ENCODE measurements at regions of chr20 and their contacts with region 1.

Region 1: DNA sequence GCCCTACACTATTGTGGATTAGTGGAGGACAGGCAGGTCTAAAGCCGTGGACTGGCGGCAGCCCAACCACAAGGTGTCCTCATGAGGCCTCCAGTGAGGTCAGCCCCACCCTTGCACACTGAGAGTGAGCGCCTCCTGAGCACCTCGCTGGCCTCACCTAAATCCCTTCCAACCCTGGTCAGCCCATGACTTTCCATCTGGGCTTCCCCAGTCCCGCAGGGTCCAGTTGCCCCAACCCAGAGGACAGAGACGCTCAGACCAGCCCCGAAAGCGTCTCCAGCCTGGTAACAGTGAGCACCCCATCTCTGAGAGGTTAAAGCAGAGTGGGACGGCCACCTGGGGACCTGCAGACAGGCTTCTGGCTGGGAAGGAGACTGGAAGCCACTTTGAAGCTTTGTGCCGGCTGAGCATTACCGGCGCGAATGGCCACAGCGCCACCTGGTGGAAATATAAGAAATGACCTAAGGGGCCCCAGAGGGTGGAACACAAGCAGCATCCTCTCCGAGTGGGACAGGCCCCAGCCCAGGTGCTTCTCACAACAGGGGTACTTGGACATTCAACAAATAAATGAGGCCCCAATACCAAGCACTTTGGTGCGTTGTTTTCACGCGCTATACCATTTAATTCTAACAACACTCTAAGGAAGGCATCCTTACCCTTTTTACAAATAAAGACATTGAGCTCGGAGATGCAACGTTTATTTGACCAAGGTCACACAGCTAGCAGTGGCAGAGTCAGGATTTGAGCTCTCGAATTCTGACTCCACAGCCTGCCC is 65.7 kb upstream of the TOP1 start:
- DNase-seq: peak; percentile 64 to 68 (median 65)
- H3K4me3 ChIP-seq: no peak overlapping the region
- H3K4me3 Mint-ChIP-seq: peak overlapping the region in 1 of 8 donors; percentile 4
- H3K27ac ChIP-seq: no peak overlapping the region
- H3K27ac Mint-ChIP-seq: no peak overlapping the region
- H3K4me1 ChIP-seq: peaks cover 16% of the 10 kb centered on the region
- H3K4me1 Mint-ChIP-seq: peaks cover 7 to 13% (median 8%) of the 10 kb centered on the region in 4 donors
- H3K27me3 ChIP-seq: no peaks in the 10 kb centered on the region
- H3K27me3 Mint-ChIP-seq: peaks cover 0 to 3% of the 10 kb centered on the region in 2 donors

Region 2: GRCh38 chr20:39264506-39265172 is 1698.3 kb before region 1 on chr20:
- CTCF ChIA-PET with region 1: interaction called, 13 read pairs
- POLR2A ChIA-PET with region 1: no interaction called
- intact Hi-C with region 1: no loop called
- DNase-seq: peak in 3 of 5 donors; percentile 2 to 11 (median 4)
- H3K4me3 ChIP-seq: no peak overlapping the region
- H3K4me3 Mint-ChIP-seq: no peak overlapping the region
- H3K27ac ChIP-seq: no peak overlapping the region
- H3K27ac Mint-ChIP-seq: no peak overlapping the region
- H3K4me1 ChIP-seq: no peaks in the 10 kb centered on the region
- H3K4me1 Mint-ChIP-seq: no peaks in the 10 kb centered on the region
- H3K27me3 ChIP-seq: no peaks in the 10 kb centered on the region
- H3K27me3 Mint-ChIP-seq: peaks cover 2 to 6% of the 10 kb centered on the region in 2 donors

Region 3: GRCh38 chr20:40741507-40742106 is 221.3 kb before region 1 on chr20:
- CTCF ChIA-PET with region 1: interaction called, 35 read pairs
- POLR2A ChIA-PET with region 1: no interaction called
- intact Hi-C with region 1: no loop called
- DNase-seq: peak in 4 of 5 donors; percentile 9 to 28 (median 22)
- H3K4me3 ChIP-seq: no peak overlapping the region
- H3K4me3 Mint-ChIP-seq: no peak overlapping the region
- H3K27ac ChIP-seq: no peak overlapping the region
- H3K27ac Mint-ChIP-seq: no peak overlapping the region
- H3K4me1 ChIP-seq: no peaks in the 10 kb centered on the region
- H3K4me1 Mint-ChIP-seq: peaks cover 3 to 6% (median 5%) of the 10 kb centered on the region in 4 donors
- H3K27me3 ChIP-seq: no peaks in the 10 kb centered on the region
- H3K27me3 Mint-ChIP-seq: peaks cover 1 to 5% of the 10 kb centered on the region in 2 donors

Region 4: GRCh38 chr20:40883097-40883496 is 79.8 kb before region 1 on chr20:
- CTCF ChIA-PET with region 1: no interaction called
- POLR2A ChIA-PET with region 1: no interaction called
- intact Hi-C with region 1: no loop called
- DNase-seq: no peak
- H3K4me3 ChIP-seq: no peak overlapping the region
- H3K4me3 Mint-ChIP-seq: peak overlapping the region in 3 of 8 donors; percentile 39 to 45 (median 41)
- H3K27ac ChIP-seq: no peak overlapping the region
- H3K27ac Mint-ChIP-seq: peak overlapping the region in 1 of 7 donors; percentile 39
- H3K4me1 ChIP-seq: peaks cover 21% of the 10 kb centered on the region
- H3K4me1 Mint-ChIP-seq: peaks cover 20 to 37% (median 25%) of the 10 kb centered on the region in 4 donors
- H3K27me3 ChIP-seq: no peaks in the 10 kb centered on the region
- H3K27me3 Mint-ChIP-seq: no peaks in the 10 kb centered on the region

Region 5: DNA sequence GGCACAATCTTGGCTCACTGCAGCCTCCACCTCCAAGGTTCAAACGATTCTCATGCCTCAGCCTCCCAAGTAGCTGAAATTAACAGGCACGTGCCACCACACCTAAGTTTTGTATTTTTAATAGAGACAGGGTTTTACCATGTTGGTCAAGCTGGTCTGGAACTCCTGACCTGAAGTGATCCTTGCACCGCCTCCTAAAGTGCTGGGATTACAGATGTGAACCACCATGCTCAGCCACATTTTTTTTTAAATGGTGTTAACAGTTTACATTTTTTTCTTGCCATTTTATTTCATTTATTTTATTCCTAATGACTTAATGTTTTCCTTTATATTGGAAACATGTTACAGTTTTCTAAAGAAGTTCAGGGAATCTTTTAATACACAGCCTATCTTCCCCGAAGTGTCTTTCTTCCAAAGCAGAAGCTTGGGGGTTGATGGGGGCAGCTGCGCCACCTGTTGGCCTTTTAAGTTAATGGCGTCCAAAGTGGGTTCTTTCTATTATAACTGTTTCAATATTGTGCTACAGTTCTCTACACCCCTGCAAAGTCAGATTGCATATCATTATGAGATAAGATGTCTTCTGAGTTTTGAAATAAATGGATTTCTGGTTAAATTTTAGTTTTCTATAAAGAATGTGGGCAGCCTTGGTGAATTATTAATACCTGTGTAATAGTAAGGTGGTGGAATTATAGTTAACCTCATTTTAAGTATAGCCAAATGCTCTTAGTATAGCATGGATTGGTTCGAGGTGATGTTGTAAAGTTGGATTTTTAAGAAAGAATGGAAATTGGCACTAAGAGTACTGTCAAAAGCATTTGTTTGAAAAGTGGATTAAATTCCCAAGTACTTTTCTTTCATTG is 132.4 kb after region 1 on chr20:
- CTCF ChIA-PET with region 1: interaction called, 147 read pairs
- POLR2A ChIA-PET with region 1: no interaction called
- intact Hi-C with region 1: loop called (anchors 1 kb)
- DNase-seq: peak in 4 of 5 donors; percentile 51 to 61 (median 54)
- H3K4me3 ChIP-seq: no peak overlapping the region
- H3K4me3 Mint-ChIP-seq: no peak overlapping the region
- H3K27ac ChIP-seq: no peak overlapping the region
- H3K27ac Mint-ChIP-seq: peak overlapping the region in 2 of 7 donors; percentile 46 to 72
- H3K4me1 ChIP-seq: no peaks in the 10 kb centered on the region
- H3K4me1 Mint-ChIP-seq: peaks cover 0 to 6% (median 0%) of the 10 kb centered on the region in 4 donors
- H3K27me3 ChIP-seq: no peaks in the 10 kb centered on the region
- H3K27me3 Mint-ChIP-seq: no peaks in the 10 kb centered on the region

Measured in CD4-positive, alpha-beta memory T cell (primary cell).